HCT116 (cell line): ENCODE measurements at regions of chr14 and their contacts with region 1.

Region 1: DNA sequence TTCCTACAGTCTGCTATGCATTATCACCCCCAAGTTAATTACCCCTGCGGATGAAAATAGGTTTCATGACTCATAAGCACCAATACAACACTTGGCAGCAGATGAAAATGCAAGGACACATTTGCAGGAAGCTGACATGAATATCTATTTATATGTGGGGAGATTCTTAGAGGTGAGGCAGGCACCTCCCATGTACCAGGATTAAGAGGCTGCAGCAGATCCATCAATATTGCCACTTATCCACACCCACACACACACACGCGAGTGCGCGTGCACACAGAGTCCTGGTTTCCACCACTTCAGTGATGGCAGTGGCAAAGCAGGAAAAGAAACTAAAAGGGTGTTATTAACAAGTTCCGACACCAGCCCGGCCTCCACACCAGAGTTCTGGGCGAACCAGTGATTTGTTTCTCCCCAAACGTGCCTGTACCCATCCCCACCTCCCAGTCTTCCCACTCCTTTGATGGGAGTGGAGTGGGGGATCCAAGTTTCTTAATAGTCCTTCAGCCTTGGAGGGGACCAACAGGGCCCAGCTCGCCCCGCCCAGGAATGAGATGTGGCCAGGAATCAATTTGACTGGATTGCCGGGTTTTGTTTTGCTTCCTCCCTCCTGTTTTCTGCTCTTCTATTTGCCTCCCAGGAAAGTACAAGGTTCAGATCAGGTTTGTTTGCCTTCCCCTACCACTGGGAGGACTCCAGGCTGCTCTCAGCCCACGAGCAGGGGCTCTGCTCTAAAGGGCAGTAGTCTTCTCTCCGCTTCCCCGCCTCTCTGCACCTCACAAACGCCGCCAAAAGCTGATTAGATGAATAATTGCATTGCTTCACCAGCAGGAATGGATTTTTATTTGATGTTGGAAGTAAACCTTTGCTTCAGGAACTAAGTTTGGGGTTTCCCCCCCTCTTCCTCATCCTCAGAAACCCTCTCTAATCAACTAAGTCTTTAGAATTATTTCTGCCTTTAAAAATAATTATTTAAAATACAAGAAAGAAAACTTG is 5.2 kb downstream of the IRF2BPL start:
- DNase-seq: no peak
- ATAC-seq: peak; percentile 40
- H3K4me3 ChIP-seq: peak overlapping the region in 1 of 2 experiments; percentile 17; a peak in 2 of 4 replicates
- H3K27ac ChIP-seq: peak overlapping the region; percentile 86
- H3K4me1 ChIP-seq: peaks cover 61 to 69% of the 10 kb centered on the region in 2 experiments
- H3K27me3 ChIP-seq: no peaks in the 10 kb centered on the region
- CTCF ChIP-seq: peak in 2 of 3 experiments; percentile 18 to 33; a peak in 3 of 6 replicates
- POLR2A ChIP-seq: peak; percentile 44
- RAD21 ChIP-seq: no peak

Region 2: DNA sequence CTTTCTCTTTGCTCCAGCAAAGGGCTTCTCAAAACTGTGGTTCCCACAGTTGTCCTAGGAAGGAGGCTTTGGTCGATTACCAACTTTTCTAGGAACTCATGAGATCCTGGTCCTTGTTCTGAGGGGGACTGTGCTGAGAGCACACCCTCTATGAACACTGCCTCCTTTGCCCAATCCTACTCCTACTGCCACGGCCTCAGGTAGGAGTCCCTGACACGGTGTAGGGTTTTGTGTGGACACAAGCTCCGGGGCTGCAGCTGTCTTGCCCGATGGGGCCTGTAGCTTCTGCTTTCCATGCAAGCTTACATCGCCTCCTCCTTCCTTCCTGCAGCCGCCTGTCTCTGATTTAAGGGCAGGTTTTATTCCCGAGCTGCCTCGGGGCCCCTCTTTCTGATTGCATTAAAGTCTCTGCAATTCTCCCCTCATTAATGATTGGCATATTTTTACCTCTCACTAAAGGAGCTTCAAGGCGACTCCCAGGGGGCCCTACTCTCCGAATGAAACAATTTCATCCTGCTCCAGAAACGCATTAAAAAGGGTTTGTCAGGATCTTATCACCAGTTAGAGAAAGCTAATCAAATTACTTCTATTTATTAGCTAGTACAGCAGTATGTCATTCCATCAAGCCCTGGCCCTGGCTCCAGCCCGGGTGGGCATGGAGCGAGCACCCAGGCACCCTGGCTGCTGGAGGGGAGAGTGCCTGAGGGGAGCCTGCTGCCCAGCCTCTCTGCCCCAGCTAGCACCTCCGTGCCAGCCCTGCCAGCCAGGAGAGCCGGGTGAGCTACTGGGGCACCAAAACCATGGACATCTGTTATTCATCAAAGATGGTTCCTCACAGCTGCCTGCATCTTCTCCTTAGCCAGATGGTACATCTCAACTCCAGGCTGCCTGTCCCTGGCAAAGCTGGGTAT is 685.4 kb before region 1 on chr14:
- CTCF ChIA-PET with region 1: no interaction called
- POLR2A ChIA-PET with region 1: no interaction called
- RAD21 ChIA-PET with region 1: no interaction called
- intact Hi-C with region 1: no loop called
- DNase-seq: no peak
- ATAC-seq: peak; percentile 71
- H3K4me3 ChIP-seq: no peak overlapping the region; a peak in 1 of 4 replicates
- H3K27ac ChIP-seq: no peak overlapping the region
- H3K4me1 ChIP-seq: no peaks in the 10 kb centered on the region
- H3K27me3 ChIP-seq: no peaks in the 10 kb centered on the region
- CTCF ChIP-seq: no peak
- POLR2A ChIP-seq: no peak
- RAD21 ChIP-seq: no peak

Region 3: GRCh38 chr14:77053046-77053841 is 29.9 kb after region 1 on chr14:
- CTCF ChIA-PET with region 1: interaction called, 9 read pairs
- POLR2A ChIA-PET with region 1: interaction called, 3 read pairs
- RAD21 ChIA-PET with region 1: interaction called, 3 to 5 read pairs
- intact Hi-C with region 1: loop called (anchors 2 kb)
- DNase-seq: no peak
- ATAC-seq: peak; percentile 84
- H3K4me3 ChIP-seq: no peak overlapping the region
- H3K27ac ChIP-seq: peak overlapping the region; percentile 50; the same call in 1 of the 2 replicates
- H3K4me1 ChIP-seq: peaks cover 27 to 33% of the 10 kb centered on the region in 2 experiments
- H3K27me3 ChIP-seq: no peaks in the 10 kb centered on the region
- CTCF ChIP-seq: peak in 2 of 3 experiments; percentile 90 to 99; a peak in 4 of 6 replicates
- POLR2A ChIP-seq: no peak
- RAD21 ChIP-seq: no peak

Region 4: DNA sequence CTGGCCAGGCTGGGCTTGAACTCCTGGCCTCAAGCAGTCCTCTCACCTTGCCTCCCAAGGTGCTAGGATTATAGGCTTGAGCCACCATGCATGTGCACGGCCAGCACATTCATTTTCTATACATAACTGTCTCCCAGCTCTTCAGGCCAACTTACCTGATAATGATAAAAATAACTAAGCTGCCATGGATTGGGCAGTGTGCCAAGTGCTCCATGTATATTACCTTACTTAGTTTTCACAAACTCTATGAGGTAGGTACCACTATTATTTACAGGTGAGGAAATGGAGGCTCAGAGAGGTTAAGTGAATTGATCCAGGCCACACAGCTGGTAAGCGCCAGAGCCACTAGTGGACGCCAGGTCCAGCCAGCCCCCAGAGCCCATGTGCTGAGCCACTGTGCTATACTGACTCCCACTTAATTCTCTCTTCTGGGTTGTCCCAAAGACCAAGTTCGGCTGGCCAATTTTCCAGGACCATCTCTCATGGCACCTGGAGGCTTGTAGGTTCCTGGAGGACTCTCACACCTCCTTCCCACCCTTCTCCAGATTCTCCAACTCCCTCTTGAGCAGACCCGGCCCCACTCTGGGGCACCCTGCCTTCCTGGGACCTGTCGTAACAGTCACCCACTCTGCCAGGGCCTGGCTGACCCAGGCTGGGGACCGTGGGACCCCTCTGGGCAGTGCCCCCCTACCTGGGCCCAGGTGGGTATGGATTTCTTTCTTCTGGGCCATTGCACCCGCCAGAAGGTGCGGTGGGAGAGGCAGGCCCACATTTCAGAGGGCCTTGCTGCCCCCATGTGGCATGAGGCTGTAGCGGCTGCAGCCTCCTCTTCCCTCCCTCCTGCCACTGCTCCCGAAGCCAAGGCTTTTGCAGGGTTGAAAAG is 44.6 kb after region 1 on chr14:
- CTCF ChIA-PET with region 1: interaction called, 19 read pairs
- POLR2A ChIA-PET with region 1: interaction called, 3 read pairs
- RAD21 ChIA-PET with region 1: interaction called in 1 of 2 experiments, 3 read pairs
- intact Hi-C with region 1: no loop called
- DNase-seq: peak; percentile 42
- ATAC-seq: peak; percentile 83
- H3K4me3 ChIP-seq: no peak overlapping the region
- H3K27ac ChIP-seq: no peak overlapping the region; the same call in 1 of the 2 replicates
- H3K4me1 ChIP-seq: peaks cover 21 to 34% of the 10 kb centered on the region in 2 experiments
- H3K27me3 ChIP-seq: no peaks in the 10 kb centered on the region
- CTCF ChIP-seq: peak; percentile 87 to 97 (median 95)
- POLR2A ChIP-seq: no peak
- RAD21 ChIP-seq: peak; percentile 99